Activated CD8-positive, alpha-beta T cell treated with anti-CD3 and anti-CD28 coated beads for 36 hours (primary cell): ENCODE measurements at regions of chr4 and their contacts with region 1.

Region 1: DNA sequence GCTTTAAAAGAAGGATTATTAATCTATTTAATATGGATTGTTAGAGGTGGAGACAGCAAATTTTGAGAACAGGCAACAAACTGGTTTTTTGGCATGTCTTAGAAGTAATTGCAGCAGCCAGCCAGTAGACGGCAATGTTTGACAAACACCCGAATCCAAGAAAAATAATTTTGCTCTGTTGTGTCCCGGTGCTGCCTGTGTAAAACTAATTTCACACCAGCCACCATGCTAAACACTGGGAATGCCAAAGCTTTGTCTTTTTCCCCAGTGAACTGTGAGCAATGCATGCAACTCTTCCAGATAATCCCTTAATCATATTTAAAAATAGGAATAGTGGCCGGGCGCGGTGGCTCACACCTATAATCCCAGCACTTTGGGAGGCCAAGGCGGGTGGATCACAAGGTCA is 25.9 kb downstream of the SMIM31 start:
- DNase-seq: peak; percentile 28
- ATAC-seq: peak; percentile 27
- H3K4me3 Mint-ChIP-seq: no peak overlapping the region
- H3K27ac Mint-ChIP-seq: no peak overlapping the region
- H3K4me1 Mint-ChIP-seq: no peaks in the 10 kb centered on the region
- H3K27me3 Mint-ChIP-seq: no peaks in the 10 kb centered on the region
- CTCF ChIP-seq: peak; percentile 80

Region 2: DNA sequence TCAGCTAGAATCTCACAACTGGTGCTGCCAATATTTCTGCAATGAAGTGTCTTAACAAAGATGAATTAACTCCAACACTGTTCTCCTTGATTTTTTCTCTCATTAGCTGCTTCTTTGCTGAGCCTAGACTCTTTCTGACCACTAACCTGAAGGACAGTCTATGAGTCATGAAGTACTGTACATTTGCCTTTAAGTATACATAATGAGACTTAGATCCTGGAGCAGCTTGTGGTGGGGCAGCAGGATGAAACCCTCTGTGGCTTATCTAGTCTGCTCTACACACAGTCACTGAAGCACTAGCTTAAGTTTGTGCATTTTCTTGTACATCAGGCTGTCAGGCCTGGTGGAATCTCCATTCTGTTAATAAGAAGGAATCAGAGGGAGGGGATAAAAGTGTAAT is 333.3 kb before region 1 on chr4:
- CTCF ChIA-PET with region 1: no interaction called
- POLR2A ChIA-PET with region 1: no interaction called
- intact Hi-C with region 1: no loop called
- DNase-seq: no peak
- ATAC-seq: no peak
- H3K4me3 Mint-ChIP-seq: no peak overlapping the region
- H3K27ac Mint-ChIP-seq: no peak overlapping the region
- H3K4me1 Mint-ChIP-seq: no peaks in the 10 kb centered on the region
- H3K27me3 Mint-ChIP-seq: no peaks in the 10 kb centered on the region
- CTCF ChIP-seq: no peak

Region 3: DNA sequence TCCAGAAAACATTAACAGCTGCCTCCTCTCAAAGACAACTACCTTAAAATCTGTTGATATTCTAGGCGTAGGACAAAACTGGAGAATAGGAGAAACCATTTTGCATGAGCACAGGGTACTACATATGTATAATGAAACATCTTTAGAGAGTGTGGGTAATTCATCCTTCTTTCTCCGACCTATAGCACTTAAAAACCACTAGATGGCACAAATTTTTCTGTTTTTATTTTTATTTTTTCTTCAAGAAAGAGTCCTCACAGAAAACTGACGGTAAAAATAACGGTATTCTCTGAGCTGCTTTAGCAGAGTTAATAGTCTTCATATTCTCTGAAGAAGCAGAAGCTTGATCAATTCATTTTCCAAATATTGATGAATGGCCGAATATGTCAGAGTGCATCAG is 11.3 kb before region 1 on chr4:
- CTCF ChIA-PET with region 1: interaction called, 15 read pairs
- POLR2A ChIA-PET with region 1: no interaction called
- intact Hi-C with region 1: no loop called
- DNase-seq: no peak
- ATAC-seq: no peak
- H3K4me3 Mint-ChIP-seq: no peak overlapping the region
- H3K27ac Mint-ChIP-seq: no peak overlapping the region
- H3K4me1 Mint-ChIP-seq: no peaks in the 10 kb centered on the region
- H3K27me3 Mint-ChIP-seq: peaks cover 14% of the 10 kb centered on the region
- CTCF ChIP-seq: no peak

Region 4: DNA sequence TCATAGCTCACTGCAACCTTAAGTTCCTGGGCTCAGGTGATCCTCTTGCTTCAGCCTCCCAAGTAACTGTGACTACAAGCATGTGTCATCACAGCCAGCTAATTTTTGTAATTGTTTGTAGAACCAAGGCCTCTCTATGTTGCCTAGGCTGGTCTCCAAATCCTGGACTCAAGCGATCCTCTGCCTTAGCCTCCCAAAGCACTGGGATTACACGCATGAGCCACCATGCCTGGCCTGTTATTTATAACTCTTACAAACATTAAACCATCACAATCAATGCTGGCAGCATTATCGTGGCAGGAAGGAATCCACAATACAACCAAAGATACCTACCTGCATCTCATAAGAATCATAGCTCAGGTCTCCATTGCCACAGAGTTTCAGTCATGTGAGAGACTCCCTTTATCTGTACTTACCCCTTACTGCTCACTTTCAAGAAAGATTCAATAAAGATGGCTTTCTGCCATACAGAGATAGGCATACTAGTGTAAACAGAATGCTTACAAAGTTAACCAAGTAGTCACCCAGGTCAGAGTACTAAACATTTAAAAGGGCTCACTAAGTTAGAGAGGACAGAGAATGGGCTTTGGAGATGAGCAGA is 22.6 kb after region 1 on chr4:
- CTCF ChIA-PET with region 1: no interaction called
- POLR2A ChIA-PET with region 1: no interaction called
- intact Hi-C with region 1: no loop called
- DNase-seq: no peak
- ATAC-seq: no peak
- H3K4me3 Mint-ChIP-seq: no peak overlapping the region
- H3K27ac Mint-ChIP-seq: no peak overlapping the region
- H3K4me1 Mint-ChIP-seq: no peaks in the 10 kb centered on the region
- H3K27me3 Mint-ChIP-seq: no peaks in the 10 kb centered on the region
- CTCF ChIP-seq: no peak

Region 5: GRCh38 chr4:164949448-164950143 is 169.8 kb after region 1 on chr4:
- CTCF ChIA-PET with region 1: no interaction called
- POLR2A ChIA-PET with region 1: no interaction called
- intact Hi-C with region 1: no loop called
- DNase-seq: no peak
- ATAC-seq: no peak
- H3K4me3 Mint-ChIP-seq: no peak overlapping the region
- H3K27ac Mint-ChIP-seq: no peak overlapping the region
- H3K4me1 Mint-ChIP-seq: no peaks in the 10 kb centered on the region
- H3K27me3 Mint-ChIP-seq: peaks cover 14% of the 10 kb centered on the region
- CTCF ChIP-seq: peak; percentile 14